ENCODE measurements at regions of chr1 and their contacts with region 1.

Region 1: GRCh38 chr1:1122078-1122811 is 6.4 kb upstream of the C1orf159 start:
- DNase-seq: no peak
- H3K4me3 ChIP-seq: peak overlapping the region in 1 of 2 donors; percentile 20
- H3K27ac ChIP-seq: no peak overlapping the region
- H3K4me1 ChIP-seq: peaks cover 11% of the 10 kb centered on the region
- H3K27me3 ChIP-seq: no peaks in the 10 kb centered on the region
- CTCF ChIP-seq: peak; percentile 80 to 96 (median 82)
- POLR2A ChIP-seq: no peak

Region 2: DNA sequence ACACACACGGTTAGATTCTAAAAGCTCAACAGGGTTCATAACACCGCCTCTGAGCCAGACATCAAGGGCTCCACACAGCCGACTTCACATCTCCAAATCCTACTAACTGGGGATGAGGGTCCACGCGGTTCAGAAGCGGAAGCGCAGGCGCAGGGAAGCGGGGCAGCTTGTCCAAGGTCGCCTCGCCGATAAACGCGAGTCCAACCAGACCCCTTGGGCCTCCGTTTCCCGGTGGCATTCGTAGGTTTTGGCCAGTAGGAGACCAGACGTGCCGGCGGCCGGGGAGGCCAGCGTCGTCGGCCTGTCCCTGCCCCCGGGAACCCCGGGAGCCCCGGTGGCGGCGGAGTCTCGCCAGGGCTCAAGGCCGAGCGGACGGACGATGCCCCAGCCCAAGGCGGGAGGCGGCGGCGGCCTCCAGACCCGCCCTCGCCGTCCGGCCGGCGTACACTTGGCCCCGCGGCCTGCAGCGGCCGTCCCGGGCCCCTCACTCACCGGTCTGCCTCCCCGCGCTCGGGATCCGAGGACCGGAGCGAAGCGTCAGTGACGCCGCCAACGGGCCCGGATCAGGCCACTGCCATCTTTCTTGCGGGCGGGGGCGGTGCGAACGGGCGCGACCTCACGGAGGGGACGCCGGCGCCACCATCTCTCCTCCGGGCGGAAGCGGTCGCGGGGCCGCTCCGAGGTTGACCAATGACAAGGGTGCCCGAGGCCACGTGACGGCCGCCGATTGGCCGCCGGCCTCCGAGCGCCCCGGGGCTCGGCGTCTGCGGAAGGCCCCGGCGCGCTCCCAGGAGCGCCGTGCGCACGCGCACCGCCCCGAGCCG is 109.4 kb after region 1 on chr1 and contains the start of gene SDF4:
- intact Hi-C with region 1: loop called (anchors 10 kb)
- DNase-seq: peak in 1 of 2 donors; percentile 93
- H3K4me3 ChIP-seq: peak within 1 kb of the TSS; percentile 80 to 94
- H3K27ac ChIP-seq: peak within 1 kb of the TSS; percentile 86
- H3K4me1 ChIP-seq: peaks cover 43% of the 10 kb centered on the region
- H3K27me3 ChIP-seq: no peaks in the 10 kb centered on the region
- CTCF ChIP-seq: no peak
- POLR2A ChIP-seq: no peak
- total RNA-seq, gene SDF4: 74.2 TPM

Region 3: GRCh38 chr1:1291548-1292441 is 169.6 kb after region 1 on chr1:
- intact Hi-C with region 1: loop called (anchors 5 kb)
- DNase-seq: no peak
- H3K4me3 ChIP-seq: no peak overlapping the region
- H3K27ac ChIP-seq: no peak overlapping the region
- H3K4me1 ChIP-seq: peaks cover 15% of the 10 kb centered on the region
- H3K27me3 ChIP-seq: no peaks in the 10 kb centered on the region
- CTCF ChIP-seq: peak in 2 of 3 experiments; percentile 48 to 67
- POLR2A ChIP-seq: no peak